Tibial artery (tissue), 4 donors: ENCODE measurements at regions of chr11 and their contacts with region 1.

Region 1: GRCh38 chr11:134033696-134034491 is 35.0 kb upstream of the JAM3 start:
- DNase-seq: peak; percentile 85 to 95
- H3K4me3 ChIP-seq: peak overlapping the region; percentile 25 to 42
- H3K27ac ChIP-seq: peak overlapping the region; percentile 82 to 94
- H3K4me1 ChIP-seq: peaks cover 3 to 53% (median 42%) of the 10 kb centered on the region in 4 donors
- H3K27me3 ChIP-seq: peaks cover 0 to 11% of the 10 kb centered on the region in 2 donors
- CTCF ChIP-seq: peak in 1 of 2 experiments; percentile 7

Region 2: GRCh38 chr11:133845413-133845812 is 188.5 kb before region 1 on chr11 and contains the start of gene SPATA19:
- intact Hi-C with region 1: no loop called
- DNase-seq: no peak
- H3K4me3 ChIP-seq: no peak within 1 kb of the TSS
- H3K27ac ChIP-seq: no peak within 1 kb of the TSS
- H3K4me1 ChIP-seq: no peaks in the 10 kb centered on the region
- H3K27me3 ChIP-seq: peaks cover 0 to 4% of the 10 kb centered on the region in 2 donors
- CTCF ChIP-seq: no peak

Region 3: DNA sequence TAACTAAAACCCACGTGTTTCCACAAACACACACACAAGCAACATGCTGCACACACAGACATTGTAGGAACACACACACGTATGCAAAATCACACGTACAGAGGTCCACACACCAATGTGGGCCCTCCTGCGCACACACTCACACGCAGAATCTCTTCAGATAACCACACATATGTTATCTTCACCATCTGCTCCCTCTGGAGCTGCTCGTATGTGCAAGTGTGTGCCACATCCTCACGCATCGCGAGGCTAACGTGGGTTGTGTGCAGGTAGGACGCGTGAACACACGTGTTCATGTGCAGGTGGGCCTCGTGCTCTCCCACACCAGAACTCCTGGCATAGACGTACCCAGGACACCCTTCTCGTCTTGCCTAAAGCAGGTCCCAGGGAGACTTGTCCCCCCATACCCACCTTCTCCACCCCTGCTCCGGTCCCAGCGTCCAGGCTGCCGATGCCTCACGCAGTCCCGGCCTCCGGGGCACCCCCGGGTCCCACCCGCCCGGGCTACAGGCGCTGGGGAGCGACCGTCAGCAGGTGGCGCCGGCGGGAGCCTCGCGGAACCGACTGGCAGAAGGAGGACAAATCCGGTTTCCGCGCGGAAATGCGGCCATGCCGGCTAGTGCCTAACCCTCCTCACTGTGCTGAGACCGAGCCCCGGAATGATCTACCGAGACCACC is 66.8 kb before region 1 on chr11:
- intact Hi-C with region 1: loop called (anchors 5 kb)
- DNase-seq: no peak
- H3K4me3 ChIP-seq: no peak overlapping the region
- H3K27ac ChIP-seq: peak overlapping the region; percentile 53 to 70
- H3K4me1 ChIP-seq: peaks cover 0 to 35% (median 25%) of the 10 kb centered on the region in 4 donors
- H3K27me3 ChIP-seq: peaks cover 0 to 13% of the 10 kb centered on the region in 2 donors
- CTCF ChIP-seq: peak; percentile 25 to 42